Activated naive CD4-positive, alpha-beta T cell treated with anti-CD3 and anti-CD28 coated beads for 36 hours (primary cell): ENCODE measurements at regions of chr19 and their contacts with region 1.

Region 1: GRCh38 chr19:38618590-38619360 is at the start of gene EIF3K:
- DNase-seq: peak; percentile 99
- H3K4me3 Mint-ChIP-seq: peak within 1 kb of the TSS; percentile 100
- H3K27ac Mint-ChIP-seq: peak within 1 kb of the TSS; percentile 91
- H3K4me1 Mint-ChIP-seq: peaks cover 45% of the 10 kb centered on the region
- H3K27me3 Mint-ChIP-seq: no peaks in the 10 kb centered on the region
- total RNA-seq, gene EIF3K: 299 to 324 TPM

Region 2: GRCh38 chr19:37906869-37907734 is 711.7 kb before region 1 on chr19 and contains the start of gene SIPA1L3:
- CTCF ChIA-PET with region 1: no interaction called
- intact Hi-C with region 1: loop called (anchors 10 kb)
- DNase-seq: peak; percentile 95
- H3K4me3 Mint-ChIP-seq: peak within 1 kb of the TSS; percentile 77
- H3K27ac Mint-ChIP-seq: peak within 1 kb of the TSS; percentile 59
- H3K4me1 Mint-ChIP-seq: peaks cover 20% of the 10 kb centered on the region
- H3K27me3 Mint-ChIP-seq: no peaks in the 10 kb centered on the region
- total RNA-seq, gene SIPA1L3: 8.1 to 10.4 TPM

Region 3: GRCh38 chr19:38374429-38375176 is 244.2 kb before region 1 on chr19 and contains the start of gene PSMD8:
- CTCF ChIA-PET with region 1: no interaction called
- intact Hi-C with region 1: loop called (anchors 1 kb)
- DNase-seq: peak; percentile 100
- H3K4me3 Mint-ChIP-seq: peak within 1 kb of the TSS; percentile 98
- H3K27ac Mint-ChIP-seq: peak within 1 kb of the TSS; percentile 93
- H3K4me1 Mint-ChIP-seq: peaks cover 32% of the 10 kb centered on the region
- H3K27me3 Mint-ChIP-seq: no peaks in the 10 kb centered on the region
- total RNA-seq, gene PSMD8: 194 to 204 TPM

Region 4: DNA sequence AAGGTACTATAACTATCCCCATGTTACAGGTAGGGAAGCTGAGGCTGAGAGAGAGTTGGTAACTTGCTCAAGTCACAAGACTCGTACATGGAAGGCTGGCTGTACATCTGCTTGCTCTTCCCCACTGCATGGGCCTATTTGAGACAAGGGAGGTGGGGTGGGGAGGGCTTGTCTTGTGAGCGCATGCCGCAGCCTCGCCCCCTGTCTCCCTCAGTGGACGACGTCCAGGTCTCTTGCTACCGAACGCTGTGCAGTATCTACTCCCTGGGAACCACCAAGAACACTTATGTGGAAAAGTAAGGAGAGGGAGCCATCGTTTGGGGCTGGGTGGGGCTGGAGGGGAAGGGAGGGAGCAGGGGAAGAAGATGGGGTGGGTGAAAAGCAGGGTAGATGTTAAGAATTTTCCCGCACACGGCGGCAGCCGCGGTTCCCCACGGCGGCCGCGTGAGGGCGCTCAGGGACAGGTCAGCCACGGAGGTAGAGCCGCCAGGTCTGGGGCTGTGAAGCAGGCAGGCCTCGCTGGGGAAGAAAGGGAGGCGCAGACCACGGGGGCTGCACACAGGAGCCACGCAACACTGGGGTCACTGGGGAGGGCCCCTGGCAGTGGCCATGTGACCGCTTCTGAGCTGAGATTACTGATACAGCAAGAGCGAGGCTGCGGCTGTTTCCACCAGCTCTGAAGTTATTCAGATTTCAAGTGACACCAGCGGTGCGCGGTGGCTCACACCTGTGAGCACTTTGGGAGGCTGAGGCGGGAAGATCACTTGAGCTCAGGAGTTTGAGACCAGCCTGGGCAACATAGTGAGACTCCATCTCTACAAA is 103.8 kb before region 1 on chr19:
- CTCF ChIA-PET with region 1: interaction called, 5 read pairs
- intact Hi-C with region 1: loop called (anchors 1 kb)
- DNase-seq: peak; percentile 82
- H3K4me3 Mint-ChIP-seq: no peak overlapping the region
- H3K27ac Mint-ChIP-seq: no peak overlapping the region
- H3K4me1 Mint-ChIP-seq: peaks cover 7% of the 10 kb centered on the region
- H3K27me3 Mint-ChIP-seq: no peaks in the 10 kb centered on the region

Region 5: GRCh38 chr19:38634757-38635482 is 16.1 kb after region 1 on chr19:
- CTCF ChIA-PET with region 1: interaction called, 42 read pairs
- intact Hi-C with region 1: loop called (anchors 1 kb)
- DNase-seq: peak; percentile 80
- H3K4me3 Mint-ChIP-seq: no peak overlapping the region
- H3K27ac Mint-ChIP-seq: no peak overlapping the region
- H3K4me1 Mint-ChIP-seq: peaks cover 29% of the 10 kb centered on the region
- H3K27me3 Mint-ChIP-seq: no peaks in the 10 kb centered on the region

Region 6: DNA sequence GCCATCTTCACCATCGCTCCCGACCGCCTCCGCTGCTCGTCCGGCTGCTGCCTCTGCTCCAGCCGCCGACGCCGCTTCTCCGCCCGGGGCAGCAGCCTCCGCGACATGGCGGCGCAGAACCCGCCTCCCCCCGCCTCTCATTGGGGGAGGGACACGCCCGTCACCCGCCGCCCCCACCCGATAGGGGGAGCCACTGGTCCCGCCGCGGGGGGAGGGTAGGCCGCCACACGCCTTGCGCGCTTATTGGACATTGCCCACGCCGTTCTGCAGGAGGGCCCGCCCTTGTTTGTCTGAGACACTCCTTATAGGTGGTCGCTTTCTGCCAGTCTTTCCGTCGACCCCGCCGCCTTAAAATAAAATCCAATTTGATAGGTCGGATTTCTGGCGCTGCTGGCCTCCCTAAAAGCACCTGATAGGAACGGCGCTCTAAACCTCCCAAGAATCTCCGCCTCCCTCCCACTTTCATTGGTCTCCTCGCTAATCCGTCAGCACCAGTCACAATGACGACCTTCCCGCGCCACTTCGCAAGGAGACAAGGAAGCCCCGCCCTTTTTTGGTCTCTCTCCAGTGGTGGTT is 231.2 kb after region 1 on chr19 and contains the start of gene HNRNPL:
- CTCF ChIA-PET with region 1: no interaction called
- intact Hi-C with region 1: loop called (anchors 1 kb)
- DNase-seq: peak; percentile 100
- H3K4me3 Mint-ChIP-seq: peak within 1 kb of the TSS; percentile 91
- H3K27ac Mint-ChIP-seq: peak within 1 kb of the TSS; percentile 96
- H3K4me1 Mint-ChIP-seq: peaks cover 50% of the 10 kb centered on the region
- H3K27me3 Mint-ChIP-seq: no peaks in the 10 kb centered on the region
- total RNA-seq, gene HNRNPL: 777 to 829 TPM